T-cell (primary cell): ENCODE measurements at regions of chr10 and their contacts with region 1.

Region 1: GRCh38 chr10:71899665-71900412 is 48.8 kb upstream of the PSAP start:
- DNase-seq: no peak
- ATAC-seq: no peak
- H3K4me3 ChIP-seq: no peak overlapping the region
- H3K4me3 Mint-ChIP-seq: no peak overlapping the region
- H3K27ac ChIP-seq: no peak overlapping the region
- H3K27ac Mint-ChIP-seq: no peak overlapping the region
- H3K4me1 ChIP-seq: peaks cover 3 to 4% of the 10 kb centered on the region in 2 experiments
- H3K4me1 Mint-ChIP-seq: peaks cover 0 to 10% (median 9%) of the 10 kb centered on the region in 3 donors
- H3K27me3 ChIP-seq: no peaks in the 10 kb centered on the region
- H3K27me3 Mint-ChIP-seq: no peaks in the 10 kb centered on the region

Region 2: DNA sequence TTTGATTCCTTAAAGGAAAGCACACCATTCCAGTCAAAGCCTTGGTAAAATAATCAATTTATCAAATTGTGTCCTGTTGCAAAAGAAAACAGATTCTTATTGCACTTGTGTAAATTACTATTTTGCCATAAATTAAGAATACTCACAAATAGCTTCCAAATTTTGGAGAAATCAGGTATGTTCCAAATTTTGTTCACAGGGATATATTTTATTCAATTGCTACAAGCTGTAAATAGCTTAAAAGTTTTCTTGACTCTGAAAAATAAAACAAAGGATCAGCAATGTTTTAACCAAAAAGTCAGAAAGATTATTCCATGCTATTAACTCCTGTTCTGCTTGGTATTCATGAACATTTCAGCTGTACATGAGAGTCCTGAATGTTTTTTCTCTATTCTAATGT is 17.0 kb after region 1 on chr10:
- CTCF ChIA-PET with region 1: interaction called, 3 to 11 read pairs
- POLR2A ChIA-PET with region 1: no interaction called
- DNase-seq: no peak
- ATAC-seq: no peak
- H3K4me3 ChIP-seq: no peak overlapping the region
- H3K4me3 Mint-ChIP-seq: no peak overlapping the region
- H3K27ac ChIP-seq: no peak overlapping the region
- H3K27ac Mint-ChIP-seq: no peak overlapping the region
- H3K4me1 ChIP-seq: no peaks in the 10 kb centered on the region
- H3K4me1 Mint-ChIP-seq: no peaks in the 10 kb centered on the region
- H3K27me3 ChIP-seq: peaks cover 0 to 11% of the 10 kb centered on the region in 2 experiments
- H3K27me3 Mint-ChIP-seq: peaks cover 0 to 2% of the 10 kb centered on the region in 2 donors

Region 3: DNA sequence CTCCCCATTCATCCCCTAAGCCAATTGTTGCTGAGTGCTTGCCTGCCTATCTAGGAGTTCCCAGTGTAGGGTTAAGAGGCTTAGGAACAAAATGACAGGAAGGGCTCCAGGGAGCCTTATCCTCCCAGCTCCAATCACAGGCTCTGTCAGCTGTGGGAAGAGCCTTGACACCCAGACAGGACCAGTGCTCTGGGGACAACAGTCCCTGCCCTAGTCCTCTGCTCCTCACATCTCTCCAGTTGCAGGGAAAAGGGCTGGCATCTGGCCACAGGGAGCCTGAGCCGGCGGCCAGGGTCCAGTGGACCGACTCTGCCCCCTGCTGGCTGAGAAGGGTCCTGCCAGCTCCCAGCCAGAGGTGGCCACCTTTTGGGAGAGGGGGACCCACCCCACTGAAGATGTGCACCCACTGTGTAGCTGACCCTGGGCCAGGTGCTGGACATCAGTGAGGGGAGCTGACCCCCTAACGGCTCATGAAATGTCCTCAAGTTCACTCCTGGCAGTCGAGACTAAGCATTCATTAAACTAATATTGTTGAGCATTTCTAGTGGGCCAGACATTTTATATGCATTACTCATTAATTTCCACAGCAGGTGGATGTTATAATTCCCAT is 437.3 kb after region 1 on chr10:
- CTCF ChIA-PET with region 1: interaction called in 1 of 2 experiments, 3 read pairs
- POLR2A ChIA-PET with region 1: interaction called in 1 of 2 experiments, 13 read pairs
- DNase-seq: peak in 28 of 35 experiments; percentile 26 to 79 (median 53)
- ATAC-seq: peak in 2 of 4 experiments; percentile 21 to 34
- H3K4me3 ChIP-seq: no peak overlapping the region
- H3K4me3 Mint-ChIP-seq: peak overlapping the region in 1 of 3 donors; percentile 50
- H3K27ac ChIP-seq: peak overlapping the region; percentile 90
- H3K27ac Mint-ChIP-seq: peak overlapping the region; percentile 16 to 43
- H3K4me1 ChIP-seq: peaks cover 46 to 63% of the 10 kb centered on the region in 2 experiments
- H3K4me1 Mint-ChIP-seq: peaks cover 59 to 66% (median 60%) of the 10 kb centered on the region in 3 donors
- H3K27me3 ChIP-seq: no peaks in the 10 kb centered on the region
- H3K27me3 Mint-ChIP-seq: no peaks in the 10 kb centered on the region